ENCODE measurements at regions of chr1 and their contacts with region 1.

Region 1: DNA sequence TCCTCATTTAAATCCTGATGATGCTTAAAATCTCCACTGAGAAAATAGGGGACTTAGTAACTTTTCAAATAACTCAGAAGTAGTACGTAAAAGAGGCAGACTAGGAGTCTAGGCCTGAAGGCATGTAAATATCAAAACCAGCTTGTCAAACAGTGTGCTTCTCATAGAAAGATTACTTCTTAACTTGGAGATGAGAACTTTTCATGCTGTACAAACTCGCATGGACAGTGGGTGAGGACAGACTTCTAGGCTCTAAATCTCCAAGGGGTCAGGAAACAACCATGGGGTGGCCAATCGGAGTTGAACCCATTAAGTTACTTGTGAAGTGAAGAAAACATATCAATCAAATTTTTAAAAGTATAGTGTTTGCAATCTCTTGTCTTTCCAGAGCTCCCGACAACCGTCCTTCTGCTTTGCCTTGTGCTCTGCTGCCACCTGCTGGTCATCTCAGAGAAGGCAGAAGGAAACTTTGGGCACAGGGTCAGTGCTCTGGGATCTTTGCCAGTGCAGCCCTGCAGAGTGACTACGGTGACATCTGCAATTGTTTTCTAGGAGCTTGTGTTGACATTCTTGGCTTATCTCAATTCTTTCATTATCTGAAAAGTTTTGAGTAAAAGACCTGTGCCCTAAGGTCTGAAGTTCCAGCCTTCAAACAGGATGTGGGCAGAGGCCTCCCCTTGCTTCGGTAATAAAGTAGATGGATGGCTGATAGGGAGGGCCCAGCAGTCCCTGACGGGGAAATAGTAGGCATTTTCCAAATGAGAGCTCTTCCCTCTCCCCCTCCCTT is 105.1 kb upstream of the PDE4B start:
- DNase-seq: peak; percentile 57 to 79 (median 63)
- H3K4me3 ChIP-seq: no peak overlapping the region
- H3K4me3 Mint-ChIP-seq: no peak overlapping the region
- H3K27ac ChIP-seq: no peak overlapping the region
- H3K27ac Mint-ChIP-seq: no peak overlapping the region
- H3K4me1 ChIP-seq: no peaks in the 10 kb centered on the region
- H3K4me1 Mint-ChIP-seq: peaks cover 0 to 6% (median 0%) of the 10 kb centered on the region in 3 donors
- H3K27me3 ChIP-seq: peaks cover 4% of the 10 kb centered on the region
- H3K27me3 Mint-ChIP-seq: peaks cover 11 to 30% of the 10 kb centered on the region in 2 donors

Region 2: DNA sequence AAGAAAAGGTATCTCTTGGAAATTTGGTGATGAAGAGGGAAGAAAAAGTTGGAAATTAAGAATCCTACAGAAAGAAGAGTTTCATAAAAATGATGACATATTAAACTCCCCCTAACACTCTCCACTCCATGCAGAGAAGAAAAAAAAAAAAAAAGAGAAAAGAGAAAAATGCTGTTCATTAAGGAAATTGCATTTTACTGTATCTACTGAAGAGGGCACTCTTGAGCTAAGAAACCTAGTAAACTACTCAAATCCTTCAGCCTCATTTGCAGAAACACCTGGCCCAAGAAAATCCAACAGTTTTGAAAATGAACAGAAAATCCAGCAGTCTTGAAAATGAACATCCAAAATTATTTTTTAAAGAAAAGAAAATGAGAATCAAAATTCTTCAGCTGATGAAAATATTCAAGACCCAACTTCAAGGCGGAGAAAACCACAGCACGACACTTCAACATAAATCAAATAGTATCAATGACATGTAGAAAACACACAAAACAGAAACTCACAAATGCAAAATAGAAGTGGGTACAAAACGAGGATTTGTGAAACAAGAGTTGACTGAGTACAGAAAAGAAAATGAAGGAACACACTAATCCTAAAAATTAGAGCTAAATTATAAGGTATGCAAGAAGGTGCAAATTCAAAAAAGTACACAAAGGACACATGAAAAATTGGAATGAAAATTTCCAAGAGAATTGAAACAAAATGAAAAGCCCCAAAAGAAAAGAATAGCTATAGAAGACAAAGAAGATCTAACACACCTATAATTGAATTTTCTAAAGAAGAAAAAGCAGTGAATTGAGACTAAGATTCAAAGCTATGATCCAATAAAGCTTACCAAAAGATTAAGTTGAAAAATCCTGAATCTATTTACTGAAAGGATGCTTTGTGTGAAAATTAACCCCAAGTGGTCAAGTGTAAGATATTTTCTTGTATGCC is 451.5 kb before region 1 on chr1:
- CTCF ChIA-PET with region 1: interaction called, 32 read pairs
- POLR2A ChIA-PET with region 1: interaction called, 4 read pairs
- DNase-seq: peak in 2 of 5 donors; percentile 16 to 21
- H3K4me3 ChIP-seq: no peak overlapping the region
- H3K4me3 Mint-ChIP-seq: no peak overlapping the region
- H3K27ac ChIP-seq: no peak overlapping the region
- H3K27ac Mint-ChIP-seq: no peak overlapping the region
- H3K4me1 ChIP-seq: no peaks in the 10 kb centered on the region
- H3K4me1 Mint-ChIP-seq: no peaks in the 10 kb centered on the region
- H3K27me3 ChIP-seq: no peaks in the 10 kb centered on the region
- H3K27me3 Mint-ChIP-seq: peaks cover 6 to 17% of the 10 kb centered on the region in 2 donors

Region 3: GRCh38 chr1:65605621-65606020 is 82.0 kb before region 1 on chr1:
- CTCF ChIA-PET with region 1: no interaction called
- POLR2A ChIA-PET with region 1: no interaction called
- DNase-seq: no peak
- H3K4me3 ChIP-seq: no peak overlapping the region
- H3K4me3 Mint-ChIP-seq: no peak overlapping the region
- H3K27ac ChIP-seq: no peak overlapping the region
- H3K27ac Mint-ChIP-seq: no peak overlapping the region
- H3K4me1 ChIP-seq: no peaks in the 10 kb centered on the region
- H3K4me1 Mint-ChIP-seq: no peaks in the 10 kb centered on the region
- H3K27me3 ChIP-seq: no peaks in the 10 kb centered on the region
- H3K27me3 Mint-ChIP-seq: peaks cover 0 to 2% of the 10 kb centered on the region in 2 donors

Region 4: DNA sequence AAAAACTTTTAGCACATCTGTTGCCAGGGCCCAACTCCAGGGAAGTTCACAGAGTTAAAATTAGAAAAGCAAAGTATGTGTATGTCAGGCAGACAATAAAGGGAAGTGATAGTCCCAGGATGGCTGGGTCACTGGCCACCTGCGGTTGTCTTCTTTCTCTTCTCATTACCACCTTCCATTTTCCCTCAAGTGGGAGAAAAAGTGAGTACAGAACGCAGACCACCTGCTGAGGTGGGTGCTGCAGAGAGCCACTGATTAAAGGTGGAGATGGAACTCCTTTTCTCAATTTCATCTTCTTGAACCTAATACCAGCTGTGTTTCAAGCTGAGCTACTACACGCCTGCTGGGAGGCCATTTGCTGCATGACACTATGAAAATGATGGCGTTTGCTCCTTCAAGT is 16.2 kb after region 1 on chr1:
- CTCF ChIA-PET with region 1: interaction called, 19 read pairs
- POLR2A ChIA-PET with region 1: no interaction called
- DNase-seq: no peak
- H3K4me3 ChIP-seq: no peak overlapping the region
- H3K4me3 Mint-ChIP-seq: no peak overlapping the region
- H3K27ac ChIP-seq: no peak overlapping the region
- H3K27ac Mint-ChIP-seq: no peak overlapping the region
- H3K4me1 ChIP-seq: no peaks in the 10 kb centered on the region
- H3K4me1 Mint-ChIP-seq: no peaks in the 10 kb centered on the region
- H3K27me3 ChIP-seq: peaks cover 14% of the 10 kb centered on the region
- H3K27me3 Mint-ChIP-seq: peaks cover 3 to 45% of the 10 kb centered on the region in 2 donors

Region 5: DNA sequence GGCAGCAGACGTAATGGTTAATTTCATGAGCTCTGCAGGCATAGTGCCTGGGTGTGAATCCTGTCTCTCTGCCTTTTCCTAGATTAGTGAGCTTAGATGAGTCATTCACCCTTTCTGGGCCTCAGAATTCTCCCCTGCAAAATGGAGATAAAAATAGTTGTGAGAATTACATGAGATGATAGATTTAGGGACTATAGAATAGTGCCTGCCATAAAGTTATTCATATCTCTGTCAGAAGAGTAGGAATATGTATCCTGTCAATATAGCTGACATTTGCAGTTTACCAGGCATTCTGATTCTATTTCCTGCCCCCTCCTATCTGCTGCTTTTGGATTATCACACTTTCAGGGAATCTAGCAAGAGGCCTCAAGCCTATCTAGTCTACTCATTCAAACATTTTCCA is 217.1 kb after region 1 on chr1:
- CTCF ChIA-PET with region 1: no interaction called
- POLR2A ChIA-PET with region 1: no interaction called
- DNase-seq: no peak
- H3K4me3 ChIP-seq: no peak overlapping the region
- H3K4me3 Mint-ChIP-seq: no peak overlapping the region
- H3K27ac ChIP-seq: no peak overlapping the region
- H3K27ac Mint-ChIP-seq: no peak overlapping the region
- H3K4me1 ChIP-seq: no peaks in the 10 kb centered on the region
- H3K4me1 Mint-ChIP-seq: no peaks in the 10 kb centered on the region
- H3K27me3 ChIP-seq: no peaks in the 10 kb centered on the region
- H3K27me3 Mint-ChIP-seq: peaks cover 0 to 25% of the 10 kb centered on the region in 2 donors

Measured in CD8-positive, alpha-beta memory T cell (primary cell).